ENCODE measurements at regions of chr19 and their contacts with region 1.

Region 1: DNA sequence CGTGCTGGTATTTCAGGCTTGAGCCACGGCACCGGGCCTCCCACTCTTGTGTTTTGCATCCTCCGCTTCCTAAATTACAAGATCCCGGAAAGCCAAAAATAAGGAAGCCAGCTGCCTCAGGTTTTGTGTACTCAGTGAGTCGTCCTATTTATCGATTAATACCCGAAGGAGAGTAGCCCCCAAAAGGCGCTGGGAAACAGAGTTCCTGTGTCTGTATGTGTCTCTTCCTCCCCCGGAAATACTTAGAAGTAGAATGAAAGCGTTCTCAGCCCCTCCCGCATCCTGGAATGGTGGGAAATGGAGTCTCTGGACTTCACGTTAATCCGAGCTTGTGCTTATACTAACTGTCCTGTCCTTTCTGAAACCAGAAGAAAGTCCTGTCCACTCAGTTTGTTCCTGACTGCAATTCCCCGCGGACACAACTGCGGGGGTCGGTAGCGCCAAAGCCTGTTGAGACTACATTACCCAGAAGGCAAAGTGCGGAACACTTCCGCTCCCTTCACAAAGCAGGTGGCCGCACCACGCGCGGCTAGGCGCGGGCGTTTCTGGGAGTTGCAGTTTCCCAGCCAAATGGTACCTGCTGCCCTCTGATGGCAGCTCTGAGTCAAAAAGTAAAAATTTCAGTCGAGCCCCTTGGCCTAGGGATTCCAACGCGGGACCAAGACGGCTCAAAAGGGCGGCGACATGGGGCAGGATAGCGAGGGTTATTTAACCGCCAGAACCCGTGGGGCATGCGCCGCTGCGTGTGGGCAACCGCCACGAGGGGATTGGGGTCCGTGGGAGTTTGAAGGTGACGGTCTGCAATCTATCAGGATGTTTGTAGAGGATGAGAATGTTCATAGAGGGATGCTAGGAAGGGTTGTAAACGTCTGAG is 2.2 kb upstream of the GSK3A start:
- DNase-seq: peak; percentile 93
- ATAC-seq: peak; percentile 49
- H3K4me3 ChIP-seq: peak overlapping the region; percentile 79 to 86 (median 81)
- H3K27ac ChIP-seq: peak overlapping the region; percentile 92
- H3K4me1 ChIP-seq: peaks cover 57% of the 10 kb centered on the region
- H3K27me3 ChIP-seq: no peaks in the 10 kb centered on the region; a peak in 1 of 5 replicates
- CTCF ChIP-seq: peak; percentile 87
- EP300 ChIP-seq: 0 out of 4 replicates have a peak, but pooled peaks of 1 of the 2 experiments have one; percentile 37
- POLR2A ChIP-seq: peak in 1 of 2 experiments; percentile 33; a peak in 3 of 4 replicates
- RAD21 ChIP-seq: peak; percentile 53

Region 2: GRCh38 chr19:42229855-42230351 is 14.7 kb before region 1 on chr19:
- CTCF ChIA-PET with region 1: no interaction called
- POLR2A ChIA-PET with region 1: interaction called, 21 read pairs
- in situ Hi-C with region 1: no loop called
- intact Hi-C with region 1: no loop called
- DNase-seq: no peak
- ATAC-seq: peak; percentile 14; the same call in 2 of the 3 replicates
- H3K4me3 ChIP-seq: no peak overlapping the region
- H3K27ac ChIP-seq: peak overlapping the region; percentile 17
- H3K4me1 ChIP-seq: peaks cover 41% of the 10 kb centered on the region
- H3K27me3 ChIP-seq: no peaks in the 10 kb centered on the region
- CTCF ChIP-seq: no peak
- EP300 ChIP-seq: no peak
- POLR2A ChIP-seq: no peak
- RAD21 ChIP-seq: no peak

Region 3: GRCh38 chr19:42268704-42269477 is 24.3 kb after region 1 on chr19 and contains the start of gene CIC:
- CTCF ChIA-PET with region 1: no interaction called
- POLR2A ChIA-PET with region 1: interaction called, 7 read pairs
- in situ Hi-C with region 1: no loop called
- intact Hi-C with region 1: loop called (anchors 1 kb)
- DNase-seq: peak; percentile 100
- ATAC-seq: peak; percentile 94
- H3K4me3 ChIP-seq: peak within 1 kb of the TSS; percentile 75 to 81 (median 81)
- H3K27ac ChIP-seq: peak within 1 kb of the TSS; percentile 96
- H3K4me1 ChIP-seq: peaks cover 29% of the 10 kb centered on the region
- H3K27me3 ChIP-seq: no peaks in the 10 kb centered on the region; a peak in 1 of 5 replicates
- CTCF ChIP-seq: no peak
- EP300 ChIP-seq: no peak
- POLR2A ChIP-seq: 0 out of 4 replicates have a peak, but pooled peaks of 1 of the 2 experiments have one; percentile 1
- RAD21 ChIP-seq: no peak
- total RNA-seq, gene CIC: 5.4 and 8.0 TPM in 2 replicates

Region 4: GRCh38 chr19:42290523-42291438 is 46.2 kb after region 1 on chr19:
- CTCF ChIA-PET with region 1: interaction called, 34 read pairs
- POLR2A ChIA-PET with region 1: interaction called, 7 read pairs
- in situ Hi-C with region 1: no loop called
- intact Hi-C with region 1: loop called (anchors 1 kb)
- DNase-seq: peak; percentile 61
- ATAC-seq: peak; percentile 81
- H3K4me3 ChIP-seq: no peak overlapping the region
- H3K27ac ChIP-seq: no peak overlapping the region
- H3K4me1 ChIP-seq: peaks cover 6% of the 10 kb centered on the region
- H3K27me3 ChIP-seq: no peaks in the 10 kb centered on the region
- CTCF ChIP-seq: peak; percentile 64
- EP300 ChIP-seq: no peak
- POLR2A ChIP-seq: 0 out of 4 replicates have a peak, but pooled peaks of 1 of the 2 experiments have one; percentile 33
- RAD21 ChIP-seq: peak; percentile 93

Region 5: GRCh38 chr19:42323852-42324654 is 79.5 kb after region 1 on chr19:
- CTCF ChIA-PET with region 1: no interaction called
- POLR2A ChIA-PET with region 1: no interaction called
- in situ Hi-C with region 1: no loop called
- intact Hi-C with region 1: no loop called
- DNase-seq: no peak
- ATAC-seq: no peak
- H3K4me3 ChIP-seq: peak overlapping the region in 2 of 3 experiments; percentile 51 to 75; a peak in 3 of 6 replicates
- H3K27ac ChIP-seq: no peak overlapping the region
- H3K4me1 ChIP-seq: peaks cover 24% of the 10 kb centered on the region
- H3K27me3 ChIP-seq: peaks cover 0 to 10% of the 10 kb centered on the region in 2 experiments; a peak in 2 of 5 replicates
- CTCF ChIP-seq: no peak
- EP300 ChIP-seq: no peak
- POLR2A ChIP-seq: no peak
- RAD21 ChIP-seq: no peak